Activated CD4-positive, alpha-beta T cell treated with anti-CD3 and anti-CD28 coated beads, Interleukin-2, amount 10 ng/mL, durations not matched to agents 24 days and 14 days (primary cell): ENCODE measurements at regions of chr3 and their contacts with region 1.

Region 1: GRCh38 chr3:167350245-167350862 is 29.7 kb downstream of the ZBBX start:
- DNase-seq: no peak
- H3K4me3 Mint-ChIP-seq: no peak overlapping the region
- H3K27ac Mint-ChIP-seq: no peak overlapping the region
- H3K4me1 Mint-ChIP-seq: no peaks in the 10 kb centered on the region
- H3K27me3 Mint-ChIP-seq: no peaks in the 10 kb centered on the region

Region 2: GRCh38 chr3:165854696-165855095 is 1495.7 kb before region 1 on chr3:
- intact Hi-C with region 1: loop called (anchors 10 kb)
- DNase-seq: no peak
- H3K4me3 Mint-ChIP-seq: no peak overlapping the region
- H3K27ac Mint-ChIP-seq: no peak overlapping the region
- H3K4me1 Mint-ChIP-seq: no peaks in the 10 kb centered on the region
- H3K27me3 Mint-ChIP-seq: no peaks in the 10 kb centered on the region

Region 3: GRCh38 chr3:167728176-167728575 is 377.8 kb after region 1 on chr3:
- intact Hi-C with region 1: no loop called
- DNase-seq: no peak
- H3K4me3 Mint-ChIP-seq: no peak overlapping the region
- H3K27ac Mint-ChIP-seq: no peak overlapping the region
- H3K4me1 Mint-ChIP-seq: peaks cover 34% of the 10 kb centered on the region
- H3K27me3 Mint-ChIP-seq: no peaks in the 10 kb centered on the region

Region 4: DNA sequence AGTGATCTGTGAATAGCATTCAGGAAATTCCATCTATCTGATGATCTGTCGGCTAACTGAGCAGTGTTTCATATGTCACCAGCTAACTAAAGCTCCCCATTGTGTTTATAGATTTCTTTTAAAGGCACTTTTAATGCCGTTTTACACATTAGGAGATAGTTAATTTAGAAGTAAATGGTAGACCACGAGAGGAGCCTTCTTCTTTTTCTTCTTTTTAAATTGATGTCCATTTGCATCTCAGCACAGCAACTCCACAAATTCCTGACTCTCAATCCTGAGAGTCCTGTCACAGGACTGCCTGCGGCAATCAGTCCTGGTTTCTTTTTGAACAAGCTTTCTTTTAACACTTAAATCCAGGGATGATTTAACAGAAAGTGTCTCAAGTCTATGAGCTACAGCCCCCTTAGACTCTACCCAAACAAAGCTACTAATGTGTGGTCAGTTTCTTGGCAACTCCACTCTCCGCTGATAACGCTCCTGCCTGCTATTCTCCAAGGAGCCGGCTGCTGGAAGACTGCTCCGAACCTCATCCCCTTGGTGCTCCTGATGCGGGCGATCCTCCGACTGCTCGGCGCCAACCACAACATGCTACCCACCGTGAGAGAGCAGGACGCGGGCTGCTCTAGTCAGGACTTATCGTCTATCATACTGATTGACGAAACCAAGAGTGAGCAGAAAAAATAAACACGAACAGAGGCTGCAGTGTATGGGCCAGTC is 1891.8 kb after region 1 on chr3:
- intact Hi-C with region 1: no loop called
- DNase-seq: no peak
- H3K4me3 Mint-ChIP-seq: no peak overlapping the region
- H3K27ac Mint-ChIP-seq: no peak overlapping the region
- H3K4me1 Mint-ChIP-seq: peaks cover 2% of the 10 kb centered on the region
- H3K27me3 Mint-ChIP-seq: peaks cover 31% of the 10 kb centered on the region